ENCODE measurements at regions of chr15 and their contacts with region 1.

Region 1: DNA sequence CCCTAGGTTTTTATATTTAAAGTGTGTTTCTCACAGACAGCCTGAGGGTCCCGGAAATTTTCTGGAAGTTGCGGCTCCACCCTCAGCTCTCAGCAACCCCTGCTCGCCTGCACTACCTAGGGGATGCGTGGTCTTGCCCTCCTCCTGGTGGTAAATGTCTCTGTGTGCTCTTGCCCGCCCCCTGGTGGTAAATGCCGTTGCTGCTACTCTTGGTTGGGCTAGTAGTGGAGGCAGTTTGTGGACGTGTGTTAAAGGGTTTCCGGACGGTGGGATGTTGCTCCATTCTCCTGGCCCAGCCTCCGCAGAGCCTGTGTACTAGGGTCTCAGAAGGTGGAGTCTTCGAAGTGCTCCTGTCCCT is 27.4 kb downstream of the STOML1 start:
- DNase-seq: peak; percentile 87
- H3K4me3 ChIP-seq: no peak overlapping the region
- H3K27ac ChIP-seq: no peak overlapping the region
- H3K4me1 ChIP-seq: peaks cover 16% of the 10 kb centered on the region
- H3K27me3 ChIP-seq: no peaks in the 10 kb centered on the region
- CTCF ChIP-seq: peak; percentile 97

Region 2: DNA sequence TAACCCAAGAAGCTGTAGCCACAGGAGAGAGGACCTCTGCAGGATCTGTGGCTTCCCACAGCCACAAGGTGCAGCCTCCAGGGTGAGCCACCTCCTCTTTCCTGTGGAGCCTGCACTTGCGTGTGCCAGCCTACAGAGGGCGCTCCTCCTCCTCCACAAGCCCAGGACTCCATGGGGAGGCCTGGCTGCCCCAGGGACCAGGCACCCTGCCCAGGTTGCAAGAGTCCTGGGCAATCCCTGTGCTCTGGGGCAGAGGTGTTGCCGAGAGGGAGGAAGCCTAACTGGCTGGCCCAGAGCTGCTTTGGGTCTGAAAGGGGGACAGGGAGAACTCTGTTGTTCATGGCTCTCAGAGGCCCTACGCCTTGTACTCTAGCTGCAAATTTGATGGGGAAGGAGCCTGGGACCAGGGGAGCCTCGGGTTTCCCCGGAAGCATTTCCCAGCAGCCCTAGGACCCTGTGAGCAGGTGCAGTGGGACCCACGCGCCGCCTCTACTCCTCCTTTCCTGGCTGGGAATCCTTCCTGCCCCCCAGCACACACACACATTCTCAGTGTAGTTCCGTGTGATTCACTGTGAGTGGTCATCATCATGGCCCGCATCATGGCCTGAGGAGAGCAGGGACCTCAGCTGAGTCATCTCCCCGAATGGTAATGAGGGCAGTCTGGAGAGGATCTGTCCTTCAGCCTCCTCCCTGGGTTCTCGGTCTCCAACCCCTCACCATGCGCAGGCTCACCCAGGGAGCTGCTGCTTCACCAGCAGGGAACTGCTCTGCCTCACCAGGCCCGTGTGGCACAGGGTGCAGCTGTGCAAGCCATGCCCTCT is 67.1 kb before region 1 on chr15:
- CTCF ChIA-PET with region 1: interaction called, 3 read pairs
- POLR2A ChIA-PET with region 1: no interaction called
- intact Hi-C with region 1: loop called (anchors 1 kb)
- DNase-seq: peak; percentile 82
- H3K4me3 ChIP-seq: no peak overlapping the region
- H3K27ac ChIP-seq: no peak overlapping the region
- H3K4me1 ChIP-seq: no peaks in the 10 kb centered on the region
- H3K27me3 ChIP-seq: no peaks in the 10 kb centered on the region
- CTCF ChIP-seq: peak; percentile 99

Region 3: DNA sequence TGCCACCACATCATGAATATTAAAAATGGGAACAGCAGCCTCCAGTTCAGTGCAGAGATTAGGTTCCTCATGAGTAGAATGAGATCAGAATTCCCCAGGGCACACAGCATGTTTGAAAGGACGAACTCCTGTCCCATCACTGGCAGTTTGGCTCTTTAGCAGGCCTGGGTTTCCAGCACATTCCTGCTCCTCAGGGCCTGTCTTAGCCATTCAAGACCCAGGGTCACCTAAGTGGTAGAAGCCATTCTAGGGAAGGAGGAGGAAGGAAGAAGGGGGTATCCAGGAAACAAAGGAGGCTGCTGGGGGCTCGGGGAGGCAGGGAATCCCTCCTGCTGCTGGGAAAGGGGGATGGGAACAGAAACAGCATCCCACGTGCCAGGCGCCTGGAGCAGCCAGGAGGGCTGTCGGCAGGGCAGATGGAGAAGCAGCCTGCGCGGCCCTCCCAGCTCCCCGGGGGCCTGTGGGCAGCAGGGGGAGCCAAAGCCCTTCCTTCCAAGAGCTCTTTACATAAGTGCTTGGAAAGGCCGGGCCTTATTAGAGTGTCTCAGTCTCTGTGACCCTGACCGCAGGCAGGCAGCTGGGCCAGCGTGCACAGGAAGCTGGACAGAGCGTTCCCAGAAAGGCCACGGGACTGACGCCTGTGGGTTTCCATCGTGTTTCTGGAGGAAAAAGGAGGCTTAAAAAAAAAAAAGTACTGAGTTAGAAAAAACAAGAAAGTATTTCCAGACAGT is 13.7 kb before region 1 on chr15:
- CTCF ChIA-PET with region 1: interaction called, 22 read pairs
- POLR2A ChIA-PET with region 1: no interaction called
- intact Hi-C with region 1: no loop called
- DNase-seq: peak; percentile 97
- H3K4me3 ChIP-seq: no peak overlapping the region
- H3K27ac ChIP-seq: peak overlapping the region; percentile 75
- H3K4me1 ChIP-seq: peaks cover 23% of the 10 kb centered on the region
- H3K27me3 ChIP-seq: no peaks in the 10 kb centered on the region
- CTCF ChIP-seq: peak; percentile 85